ENCODE measurements at regions of chr5 and their contacts with region 1.

Region 1: DNA sequence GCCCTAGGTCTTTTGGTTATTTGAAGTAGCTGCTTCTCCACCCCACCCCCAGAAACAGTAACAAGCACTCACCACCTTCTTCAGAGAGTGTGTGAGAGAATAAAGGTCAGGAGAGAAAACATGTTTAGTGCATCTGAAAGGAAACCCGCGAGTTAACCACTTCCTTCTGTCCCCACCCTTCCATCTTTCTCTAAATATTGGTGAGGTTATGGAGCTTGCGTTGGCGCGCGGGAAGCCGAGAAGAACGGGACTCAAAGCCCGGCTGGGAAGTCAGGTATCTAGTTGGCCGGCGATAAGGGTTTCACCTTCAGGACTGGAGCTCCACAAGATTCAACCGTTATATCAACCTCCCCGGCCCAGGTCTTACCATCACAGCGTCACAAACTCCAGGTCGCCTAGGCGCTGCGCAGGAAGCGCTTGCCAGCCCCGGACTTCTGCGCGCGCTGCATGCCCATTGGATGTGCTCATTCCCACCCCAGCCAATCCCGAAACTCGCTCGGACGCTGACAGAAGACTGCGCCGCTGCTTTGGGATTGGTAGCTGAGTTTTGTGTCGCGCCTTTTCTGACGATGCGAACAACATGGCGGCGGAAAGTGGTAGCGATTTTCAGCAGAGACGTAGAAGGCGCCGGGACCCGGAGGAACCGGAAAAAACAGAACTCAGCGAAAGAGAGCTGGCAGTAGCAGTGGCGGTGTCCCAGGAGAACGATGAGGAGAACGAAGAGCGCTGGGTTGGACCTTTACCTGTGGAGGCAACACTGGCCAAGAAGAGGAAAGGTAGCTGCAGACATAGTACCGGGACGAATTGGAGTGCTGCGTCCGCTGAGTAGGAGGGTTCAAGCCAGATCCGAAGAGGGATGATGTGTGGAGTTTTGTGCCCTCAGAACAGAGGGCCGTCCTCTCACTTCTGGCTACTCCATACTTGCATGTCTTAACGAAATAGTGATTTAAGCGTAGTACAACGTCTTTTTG is at the starts of genes CENPK and PPWD1:
- DNase-seq: peak; percentile 98
- H3K4me3 Mint-ChIP-seq: peak within 1 kb of the TSS; percentile 98
- H3K27ac Mint-ChIP-seq: peak within 1 kb of the TSS; percentile 96
- H3K4me1 Mint-ChIP-seq: peaks cover 45% of the 10 kb centered on the region
- H3K27me3 Mint-ChIP-seq: no peaks in the 10 kb centered on the region
- total RNA-seq, gene CENPK: 80.9 to 83.1 TPM
- total RNA-seq, gene PPWD1: 33.6 to 33.9 TPM

Region 2: DNA sequence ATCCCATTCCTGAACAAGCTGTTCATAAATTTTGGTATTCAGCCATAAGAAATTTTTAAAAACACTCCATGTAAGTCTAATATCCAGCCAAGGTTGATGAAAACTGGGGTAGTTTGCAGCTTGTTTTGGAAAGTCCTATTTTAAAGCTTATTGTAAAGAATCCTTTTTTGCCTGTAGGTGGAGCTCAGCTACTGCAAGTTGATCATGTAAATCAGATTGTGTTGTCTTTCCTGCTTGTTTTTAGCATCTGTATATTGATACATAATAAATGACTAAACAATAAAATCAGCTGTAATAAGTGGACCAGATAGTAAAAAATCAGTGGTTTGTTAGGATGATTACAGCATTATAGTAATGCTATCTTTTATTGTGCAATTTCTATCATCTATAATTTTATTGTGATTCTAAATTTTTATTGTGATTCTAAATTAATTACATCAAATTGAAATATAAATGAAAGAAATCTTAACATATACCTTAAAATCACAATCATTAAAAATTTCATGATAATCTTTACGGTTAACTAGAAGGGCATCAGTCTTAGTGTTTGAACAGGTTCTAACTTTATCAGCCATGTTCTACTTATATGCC is 751.9 kb before region 1 on chr5:
- CTCF ChIA-PET with region 1: no interaction called
- intact Hi-C with region 1: loop called (anchors 2 kb)
- DNase-seq: peak; percentile 8
- H3K4me3 Mint-ChIP-seq: no peak overlapping the region
- H3K27ac Mint-ChIP-seq: no peak overlapping the region
- H3K4me1 Mint-ChIP-seq: peaks cover 4% of the 10 kb centered on the region
- H3K27me3 Mint-ChIP-seq: no peaks in the 10 kb centered on the region

Region 3: DNA sequence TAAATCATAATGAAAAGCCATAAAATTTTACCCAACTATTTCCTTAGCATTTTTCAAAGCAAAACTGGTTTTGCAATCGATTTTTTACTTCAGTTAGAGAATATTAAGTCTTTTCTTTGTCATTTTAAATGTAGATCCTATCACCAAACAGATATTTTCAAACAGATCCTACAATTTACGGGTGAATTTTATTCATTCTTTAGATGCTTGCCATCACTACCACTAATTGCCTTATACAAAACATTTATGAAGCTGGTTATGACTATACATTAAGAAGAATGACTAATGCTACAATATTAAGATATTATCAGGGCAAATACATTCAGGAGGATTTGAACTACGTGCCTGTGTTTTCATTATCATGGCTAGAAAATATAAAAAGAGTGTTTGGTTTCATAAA is 597.4 kb before region 1 on chr5:
- CTCF ChIA-PET with region 1: no interaction called
- intact Hi-C with region 1: no loop called
- DNase-seq: no peak
- H3K4me3 Mint-ChIP-seq: no peak overlapping the region
- H3K27ac Mint-ChIP-seq: no peak overlapping the region
- H3K4me1 Mint-ChIP-seq: no peaks in the 10 kb centered on the region
- H3K27me3 Mint-ChIP-seq: no peaks in the 10 kb centered on the region

Region 4: GRCh38 chr5:65577141-65577540 is 14.1 kb after region 1 on chr5:
- CTCF ChIA-PET with region 1: no interaction called
- intact Hi-C with region 1: loop called (anchors 1 kb)
- DNase-seq: no peak
- H3K4me3 Mint-ChIP-seq: no peak overlapping the region
- H3K27ac Mint-ChIP-seq: peak overlapping the region; percentile 3
- H3K4me1 Mint-ChIP-seq: peaks cover 29% of the 10 kb centered on the region
- H3K27me3 Mint-ChIP-seq: no peaks in the 10 kb centered on the region

Region 5: GRCh38 chr5:65612298-65612907 is 49.4 kb after region 1 on chr5:
- CTCF ChIA-PET with region 1: no interaction called
- intact Hi-C with region 1: no loop called
- DNase-seq: no peak
- H3K4me3 Mint-ChIP-seq: no peak overlapping the region
- H3K27ac Mint-ChIP-seq: no peak overlapping the region
- H3K4me1 Mint-ChIP-seq: peaks cover 4% of the 10 kb centered on the region
- H3K27me3 Mint-ChIP-seq: no peaks in the 10 kb centered on the region

Region 6: GRCh38 chr5:65624571-65625555 is 61.8 kb after region 1 on chr5 and contains the starts of genes SHLD3 and TRAPPC13:
- CTCF ChIA-PET with region 1: no interaction called
- intact Hi-C with region 1: loop called (anchors 1 kb)
- DNase-seq: peak; percentile 88
- H3K4me3 Mint-ChIP-seq: peak within 1 kb of the TSS; percentile 99
- H3K27ac Mint-ChIP-seq: peak within 1 kb of the TSS; percentile 94
- H3K4me1 Mint-ChIP-seq: peaks cover 50% of the 10 kb centered on the region
- H3K27me3 Mint-ChIP-seq: no peaks in the 10 kb centered on the region
- total RNA-seq, gene SHLD3: 2.9 to 3.1 TPM
- total RNA-seq, gene TRAPPC13: 25.7 to 29.0 TPM

Region 7: DNA sequence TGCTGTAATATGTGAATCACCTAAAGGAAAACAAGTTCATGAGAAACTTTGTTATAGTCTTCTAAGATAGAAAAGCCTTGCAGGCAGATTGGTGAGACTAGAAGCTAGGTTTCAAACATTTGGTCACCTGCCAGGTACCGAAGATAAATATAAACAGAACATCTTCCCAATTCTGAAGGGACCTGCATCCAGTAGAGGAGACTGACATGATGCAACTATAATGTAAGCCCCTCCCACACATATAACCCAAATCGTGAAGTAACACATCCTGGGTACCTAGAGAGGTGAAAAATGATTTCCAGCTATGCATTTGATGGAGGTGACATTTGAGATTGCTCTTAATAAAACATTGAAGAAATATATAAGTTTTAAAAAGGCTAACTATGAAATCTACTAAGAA is 91.7 kb after region 1 on chr5:
- CTCF ChIA-PET with region 1: no interaction called
- intact Hi-C with region 1: no loop called
- DNase-seq: no peak
- H3K4me3 Mint-ChIP-seq: no peak overlapping the region
- H3K27ac Mint-ChIP-seq: no peak overlapping the region
- H3K4me1 Mint-ChIP-seq: no peaks in the 10 kb centered on the region
- H3K27me3 Mint-ChIP-seq: no peaks in the 10 kb centered on the region

Region 8: DNA sequence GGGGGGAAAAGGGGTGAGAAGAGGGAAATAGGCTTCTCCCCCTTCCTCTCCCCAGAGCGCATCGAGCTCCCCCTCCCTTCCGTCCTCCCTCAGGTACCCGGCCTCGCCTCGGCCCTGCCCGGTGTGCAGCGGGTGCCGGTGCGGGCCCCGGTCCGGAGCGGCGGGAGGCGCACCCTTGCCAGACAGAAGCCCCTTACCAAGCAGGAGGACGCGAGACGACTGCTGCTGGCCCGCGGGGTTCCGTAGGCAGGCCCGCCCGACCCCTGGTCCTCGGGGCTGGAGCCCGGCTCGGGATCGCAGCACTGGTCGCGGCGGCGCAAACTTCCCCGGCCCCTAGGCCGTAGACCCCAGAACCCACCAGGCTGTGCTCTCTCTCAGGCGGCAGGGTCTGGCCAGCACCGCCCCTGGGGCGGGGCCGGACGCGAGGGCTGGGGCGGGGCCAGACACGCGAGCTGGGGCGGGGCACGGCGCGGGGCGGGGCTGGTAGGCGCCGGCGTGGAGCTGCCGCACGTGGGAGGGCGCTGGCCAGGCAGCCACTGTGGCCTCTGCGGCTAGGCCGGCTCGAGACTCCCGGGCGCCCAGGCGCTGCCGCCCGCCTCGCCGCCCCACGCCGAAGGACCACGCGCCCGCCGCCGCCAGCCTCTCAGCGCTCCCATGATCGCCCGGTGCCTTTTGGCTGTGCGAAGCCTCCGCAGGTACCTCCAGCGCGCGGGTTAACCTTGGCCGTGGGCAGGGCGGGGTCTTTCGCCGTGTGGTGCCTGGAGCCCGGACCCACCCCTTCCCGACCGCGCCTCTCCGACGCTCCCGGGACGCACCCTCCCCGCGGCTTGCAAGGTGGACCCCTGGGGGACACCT is 158.9 kb after region 1 on chr5 and contains the starts of genes NLN and SGTB:
- CTCF ChIA-PET with region 1: no interaction called
- intact Hi-C with region 1: loop called (anchors 1 kb)
- DNase-seq: peak; percentile 80
- H3K4me3 Mint-ChIP-seq: peak within 1 kb of the TSS; percentile 88
- H3K27ac Mint-ChIP-seq: peak within 1 kb of the TSS; percentile 94
- H3K4me1 Mint-ChIP-seq: peaks cover 13% of the 10 kb centered on the region
- H3K27me3 Mint-ChIP-seq: no peaks in the 10 kb centered on the region
- total RNA-seq, gene NLN: 32.4 to 35.5 TPM
- total RNA-seq, gene SGTB: 16.1 to 17.3 TPM

Region 9: DNA sequence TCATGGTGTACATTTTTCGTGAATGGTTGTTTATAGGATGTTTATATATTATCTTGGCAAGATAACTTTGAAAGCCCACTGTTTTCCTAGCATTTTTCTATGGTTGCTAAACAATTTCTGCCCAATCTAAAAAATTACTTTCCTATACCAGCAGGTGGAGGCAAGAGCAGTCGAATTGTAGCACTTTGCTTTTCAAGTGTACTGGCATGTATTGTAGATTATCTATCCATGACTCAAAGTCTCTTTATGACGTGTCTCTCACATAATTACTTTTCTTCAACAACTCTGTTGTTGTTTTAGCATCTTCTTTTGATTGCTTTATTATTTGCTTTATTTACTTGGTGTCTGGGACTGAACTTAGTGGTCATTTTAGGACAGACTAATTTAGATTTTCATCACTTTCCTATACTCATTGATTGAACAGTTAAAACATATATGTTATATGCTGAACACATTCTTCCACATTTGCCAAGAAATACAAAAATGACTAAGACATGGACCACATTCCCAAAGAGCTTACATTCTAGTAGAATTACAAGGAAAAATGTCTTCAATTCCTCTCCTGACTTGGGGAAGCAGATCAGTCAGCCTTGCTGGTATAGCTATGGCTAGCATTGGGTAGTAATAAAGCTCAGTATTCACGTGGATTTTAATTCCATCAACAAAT is 179.7 kb after region 1 on chr5:
- CTCF ChIA-PET with region 1: no interaction called
- intact Hi-C with region 1: no loop called
- DNase-seq: peak; percentile 49
- H3K4me3 Mint-ChIP-seq: no peak overlapping the region
- H3K27ac Mint-ChIP-seq: no peak overlapping the region
- H3K4me1 Mint-ChIP-seq: peaks cover 13% of the 10 kb centered on the region
- H3K27me3 Mint-ChIP-seq: no peaks in the 10 kb centered on the region